Heart right ventricle (tissue), 16 donors: ENCODE measurements at regions of chr7 and their contacts with region 1.

Region 1: GRCh38 chr7:5704534-5704922 is 76.9 kb downstream of the RNF216 start:
- DNase-seq: peak; percentile 61 to 85
- ATAC-seq: peak; percentile 31 to 83 (median 73)
- H3K4me3 ChIP-seq: no peak overlapping the region
- H3K27ac ChIP-seq: peak overlapping the region in 4 of 10 donors; percentile 43 to 66 (median 59)
- H3K4me1 ChIP-seq: peaks cover 0 to 51% (median 28%) of the 10 kb centered on the region in 9 donors
- H3K27me3 ChIP-seq: no peaks in the 10 kb centered on the region
- CTCF ChIP-seq: peak; percentile 85 to 97 (median 90)

Region 2: GRCh38 chr7:5557920-5558401 is 146.6 kb before region 1 on chr7:
- intact Hi-C with region 1: loop called in 1 of 10 experiments (anchors 2 kb)
- DNase-seq: peak; percentile 65 to 76
- ATAC-seq: peak; percentile 13 to 57 (median 42)
- H3K4me3 ChIP-seq: peak overlapping the region in 7 of 10 donors; percentile 21 to 72 (median 31)
- H3K27ac ChIP-seq: peak overlapping the region; percentile 90 to 100 (median 100)
- H3K4me1 ChIP-seq: peaks cover 30 to 69% (median 61%) of the 10 kb centered on the region in 9 donors
- H3K27me3 ChIP-seq: no peaks in the 10 kb centered on the region
- CTCF ChIP-seq: no peak

Region 3: GRCh38 chr7:5564879-5565278 is 139.6 kb before region 1 on chr7:
- intact Hi-C with region 1: loop called in 1 of 10 experiments (anchors 2 kb)
- DNase-seq: no peak
- ATAC-seq: no peak
- H3K4me3 ChIP-seq: no peak overlapping the region
- H3K27ac ChIP-seq: no peak overlapping the region
- H3K4me1 ChIP-seq: peaks cover 13 to 35% (median 30%) of the 10 kb centered on the region in 9 donors
- H3K27me3 ChIP-seq: no peaks in the 10 kb centered on the region
- CTCF ChIP-seq: no peak

Region 4: GRCh38 chr7:5665094-5666025 is 39.2 kb before region 1 on chr7:
- intact Hi-C with region 1: loop called in 4 of 10 experiments (anchors 5 kb)
- DNase-seq: peak in 1 of 2 donors; percentile 84
- ATAC-seq: peak; percentile 42 to 86 (median 76)
- H3K4me3 ChIP-seq: no peak overlapping the region
- H3K27ac ChIP-seq: no peak overlapping the region
- H3K4me1 ChIP-seq: peaks cover 4 to 62% (median 33%) of the 10 kb centered on the region in 9 donors
- H3K27me3 ChIP-seq: no peaks in the 10 kb centered on the region
- CTCF ChIP-seq: peak; percentile 75 to 91 (median 85)

Region 5: GRCh38 chr7:5755704-5756504 is 51.4 kb after region 1 on chr7:
- intact Hi-C with region 1: no loop called
- DNase-seq: no peak
- ATAC-seq: peak in 2 of 8 donors; percentile 25 to 73
- H3K4me3 ChIP-seq: no peak overlapping the region
- H3K27ac ChIP-seq: no peak overlapping the region
- H3K4me1 ChIP-seq: peaks cover 0 to 22% (median 6%) of the 10 kb centered on the region in 9 donors
- H3K27me3 ChIP-seq: no peaks in the 10 kb centered on the region
- CTCF ChIP-seq: no peak